Right ventricle myocardium superior (tissue), 1 donor: ENCODE measurements at regions of chr6 and their contacts with region 1.

Region 1: GRCh38 chr6:142885182-142885867 is 59.7 kb downstream of the HIVEP2 start:
- DNase-seq: no peak
- ATAC-seq: peak; percentile 94

Region 2: GRCh38 chr6:142810952-142811514 is 74.3 kb before region 1 on chr6:
- intact Hi-C with region 1: no loop called
- DNase-seq: no peak
- ATAC-seq: no peak

Region 3: GRCh38 chr6:142946181-142946923 is 61.0 kb after region 1 on chr6:
- intact Hi-C with region 1: loop called (anchors 5 kb)
- DNase-seq: peak; percentile 97
- ATAC-seq: peak; percentile 86